ENCODE measurements at regions of chr12 and their contacts with region 1.

Region 1: DNA sequence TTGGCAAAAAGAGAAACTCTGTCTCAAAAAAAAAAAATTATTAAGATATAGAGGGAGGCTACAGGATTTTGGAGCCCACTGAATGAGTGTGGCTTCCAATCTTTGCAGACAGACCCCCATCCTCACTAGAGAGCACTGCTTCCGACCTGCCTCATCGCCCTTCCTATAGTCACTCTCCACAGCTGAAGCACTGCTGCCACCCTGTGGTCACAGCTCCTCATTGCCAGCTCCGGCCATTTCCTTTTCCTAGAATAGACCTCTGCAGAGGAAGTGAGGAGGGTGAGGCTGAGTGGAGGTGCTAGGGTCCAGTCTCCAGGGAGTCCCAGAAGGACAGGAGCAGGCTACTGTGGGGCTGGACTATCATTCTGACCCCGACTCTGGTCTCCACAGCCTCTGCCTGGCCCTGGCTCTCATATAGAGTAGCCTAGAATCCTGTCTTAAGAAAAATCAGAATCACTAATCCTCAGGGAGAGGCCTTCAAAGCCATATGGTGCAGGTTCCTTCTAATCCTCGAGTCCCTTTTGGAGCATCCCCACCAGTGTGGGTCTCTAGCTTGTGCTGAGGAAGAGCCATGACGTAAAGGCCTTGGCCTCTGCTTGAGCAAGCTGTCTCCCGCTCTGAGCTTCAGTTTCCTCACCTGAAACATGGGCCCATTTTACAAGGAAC is 1.4 kb upstream of the NPFF start:
- DNase-seq: peak; percentile 92
- ATAC-seq: peak; percentile 98
- H3K4me3 Mint-ChIP-seq: no peak overlapping the region
- H3K27ac Mint-ChIP-seq: peak overlapping the region; percentile 78
- H3K4me1 Mint-ChIP-seq: peaks cover 13% of the 10 kb centered on the region
- H3K27me3 Mint-ChIP-seq: no peaks in the 10 kb centered on the region

Region 2: GRCh38 chr12:53427905-53428594 is 80.6 kb before region 1 on chr12:
- CTCF ChIA-PET with region 1: interaction called, 18 read pairs
- DNase-seq: no peak
- ATAC-seq: peak; percentile 78
- H3K4me3 Mint-ChIP-seq: no peak overlapping the region
- H3K27ac Mint-ChIP-seq: no peak overlapping the region
- H3K4me1 Mint-ChIP-seq: peaks cover 3% of the 10 kb centered on the region
- H3K27me3 Mint-ChIP-seq: no peaks in the 10 kb centered on the region

Region 3: DNA sequence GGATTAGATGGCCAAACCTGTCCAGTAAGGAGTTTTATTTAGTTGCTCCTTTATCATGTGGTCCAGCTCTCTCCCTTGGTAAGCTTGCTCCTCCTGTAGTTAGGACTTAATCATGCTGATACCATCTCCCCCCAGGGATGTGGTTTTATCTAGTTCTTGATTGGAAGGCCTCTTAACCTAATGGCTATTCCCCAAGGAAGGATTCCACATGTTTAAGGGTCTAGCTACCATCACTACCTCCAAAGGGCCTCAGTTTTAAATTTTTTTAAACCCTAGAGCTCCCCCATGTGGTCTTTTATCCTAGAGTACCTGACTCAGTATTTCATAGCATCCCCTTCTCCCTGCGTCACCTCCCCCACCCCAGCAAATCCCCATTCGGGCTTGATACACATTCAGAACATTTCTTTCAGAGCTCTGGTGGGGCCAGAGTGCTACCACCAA is 31.9 kb before region 1 on chr12:
- CTCF ChIA-PET with region 1: interaction called, 20 read pairs
- DNase-seq: no peak
- ATAC-seq: no peak
- H3K4me3 Mint-ChIP-seq: no peak overlapping the region
- H3K27ac Mint-ChIP-seq: no peak overlapping the region
- H3K4me1 Mint-ChIP-seq: peaks cover 40% of the 10 kb centered on the region
- H3K27me3 Mint-ChIP-seq: no peaks in the 10 kb centered on the region

Region 4: GRCh38 chr12:53492830-53493611 is 15.6 kb before region 1 on chr12:
- CTCF ChIA-PET with region 1: interaction called, 26 read pairs
- DNase-seq: peak; percentile 90
- ATAC-seq: peak; percentile 95
- H3K4me3 Mint-ChIP-seq: peak overlapping the region; percentile 88
- H3K27ac Mint-ChIP-seq: peak overlapping the region; percentile 84
- H3K4me1 Mint-ChIP-seq: peaks cover 32% of the 10 kb centered on the region
- H3K27me3 Mint-ChIP-seq: no peaks in the 10 kb centered on the region

Region 5: DNA sequence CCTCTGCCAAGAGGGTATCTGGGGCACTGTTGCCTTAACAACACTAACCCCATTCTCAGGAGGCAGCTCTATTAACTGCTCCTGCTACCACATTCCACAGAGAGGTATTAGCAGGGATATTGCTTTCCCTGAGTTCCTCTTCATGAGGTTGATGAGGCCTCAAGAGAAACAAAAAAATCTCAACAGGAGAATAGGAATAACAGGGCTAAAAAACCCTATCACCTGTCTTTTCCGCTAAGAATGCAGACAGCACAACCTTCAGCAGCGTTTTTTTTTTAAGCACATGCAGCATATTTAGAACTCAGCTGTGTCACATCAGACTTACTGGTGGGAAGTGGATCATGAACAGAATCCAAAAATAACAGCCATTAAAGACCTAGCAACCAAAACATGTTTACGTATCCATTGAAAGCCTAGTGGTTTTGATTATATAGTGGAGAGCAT is 88.3 kb after region 1 on chr12:
- CTCF ChIA-PET with region 1: no interaction called
- DNase-seq: no peak
- ATAC-seq: no peak
- H3K4me3 Mint-ChIP-seq: no peak overlapping the region
- H3K27ac Mint-ChIP-seq: no peak overlapping the region
- H3K4me1 Mint-ChIP-seq: peaks cover 2% of the 10 kb centered on the region
- H3K27me3 Mint-ChIP-seq: no peaks in the 10 kb centered on the region

Measured in activated CD8-positive, alpha-beta memory T cell treated with anti-CD3 and anti-CD28 coated beads, Interleukin-2, amount 10 ng/mL, durations not matched to agents 7 days and 5 days (primary cell).